HEK293T (cell line): ENCODE measurements at regions of chr6 and their contacts with region 1.

Region 1: DNA sequence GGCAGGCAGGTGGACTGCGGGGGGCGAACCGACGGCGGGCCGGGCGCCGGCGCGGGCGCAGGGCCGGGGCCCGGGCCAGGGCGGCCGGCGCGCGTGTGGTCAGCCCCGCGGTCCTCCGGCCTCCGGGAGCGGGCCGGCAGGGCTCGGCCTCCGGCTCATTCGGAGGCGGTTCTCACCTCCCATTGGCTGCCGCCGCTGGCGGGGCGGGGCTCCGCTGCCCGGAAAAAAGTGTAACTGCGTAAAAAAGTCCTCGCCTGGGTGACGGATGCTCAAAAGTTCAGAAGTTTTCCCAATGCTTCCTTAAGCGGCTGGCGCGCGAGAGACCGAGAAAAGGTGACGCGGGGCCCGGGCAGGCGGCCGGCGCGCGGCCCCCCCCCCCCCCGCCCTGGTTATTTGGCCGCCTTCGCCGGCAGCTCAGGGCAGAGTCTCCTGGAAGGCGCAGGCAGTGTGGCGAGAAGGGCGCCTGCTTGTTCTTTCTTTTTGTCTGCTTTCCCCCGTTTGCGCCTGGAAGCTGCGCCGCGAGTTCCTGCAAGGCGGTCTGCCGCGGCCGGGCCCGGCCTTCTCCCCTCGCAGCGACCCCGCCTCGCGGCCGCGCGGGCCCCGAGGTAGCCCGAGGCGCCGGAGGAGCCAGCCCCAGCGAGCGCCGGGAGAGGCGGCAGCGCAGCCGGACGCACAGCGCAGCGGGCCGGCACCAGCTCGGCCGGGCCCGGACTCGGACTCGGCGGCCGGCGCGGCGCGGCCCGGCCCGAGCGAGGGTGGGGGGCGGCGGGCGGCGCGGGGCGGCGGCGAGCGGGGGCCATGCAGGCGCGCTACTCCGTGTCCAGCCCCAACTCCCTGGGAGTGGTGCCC is at the start of gene FOXC1:
- DNase-seq: peak; percentile 77

Region 2: DNA sequence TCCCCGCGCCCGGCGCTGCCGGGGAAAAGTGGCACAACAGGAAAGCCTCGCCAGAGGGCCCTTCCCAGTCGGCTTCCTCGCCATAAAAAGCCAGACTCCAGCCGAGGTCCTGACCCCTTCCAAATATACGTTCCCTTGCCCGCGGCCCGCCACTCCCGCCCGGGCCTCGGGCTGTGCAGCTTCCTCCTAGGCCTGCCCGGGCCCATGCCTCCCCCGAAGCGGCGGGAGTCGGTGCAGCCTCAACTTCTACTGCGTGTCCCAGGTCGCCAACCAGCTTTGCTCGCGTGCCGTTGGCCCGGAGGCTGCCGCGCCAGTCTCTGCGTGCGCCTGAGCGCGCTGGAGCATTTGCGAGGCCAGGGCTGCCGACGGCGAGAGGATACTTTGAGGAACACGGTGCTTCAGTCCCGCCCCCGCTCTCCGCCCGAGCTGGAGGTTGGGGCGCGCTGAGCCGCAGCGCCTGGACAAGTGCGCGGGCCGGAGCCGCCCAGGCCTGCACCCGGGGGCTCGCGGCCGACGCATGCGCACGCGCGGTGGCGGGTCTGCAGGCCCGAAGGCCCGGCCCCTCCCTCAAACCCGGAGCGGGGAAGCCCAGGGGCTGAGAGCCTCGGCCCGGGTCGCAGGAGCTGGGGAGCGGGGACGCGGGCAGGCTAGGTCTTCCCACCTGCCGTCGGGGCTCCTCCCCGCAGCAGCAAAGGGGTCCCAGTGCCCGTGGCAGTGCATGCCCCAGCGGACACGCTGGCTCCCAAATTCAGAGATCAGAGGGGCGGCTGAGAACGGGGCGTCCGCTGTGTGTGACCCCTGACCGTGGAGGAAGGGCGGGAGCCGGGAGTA is 10.0 kb after region 1 on chr6:
- CTCF ChIA-PET with region 1: interaction called, 4 read pairs
- POLR2A ChIA-PET with region 1: interaction called, 144 read pairs
- DNase-seq: no peak

Region 3: GRCh38 chr6:1670702-1671462 is 61.0 kb after region 1 on chr6:
- CTCF ChIA-PET with region 1: interaction called, 4 read pairs
- POLR2A ChIA-PET with region 1: interaction called, 70 read pairs
- DNase-seq: peak; percentile 26

Region 4: GRCh38 chr6:1701668-1702353 is 91.9 kb after region 1 on chr6:
- CTCF ChIA-PET with region 1: interaction called, 7 read pairs
- POLR2A ChIA-PET with region 1: interaction called, 39 read pairs
- DNase-seq: peak; percentile 24

Region 5: GRCh38 chr6:1838604-1839213 is 228.8 kb after region 1 on chr6:
- CTCF ChIA-PET with region 1: no interaction called
- POLR2A ChIA-PET with region 1: interaction called, 29 read pairs
- DNase-seq: no peak